Activated B cell treated with CpG ODN at 0.5 μM for 24 hours (primary cell): ENCODE measurements at regions of chr12 and their contacts with region 1.

Region 1: GRCh38 chr12:92928962-92929915 is at the start of gene EEA1:
- DNase-seq: peak; percentile 91
- ATAC-seq: peak; percentile 84
- H3K4me3 Mint-ChIP-seq: peak within 1 kb of the TSS; percentile 89
- H3K27ac Mint-ChIP-seq: peak within 1 kb of the TSS; percentile 96
- H3K4me1 Mint-ChIP-seq: peaks cover 32% of the 10 kb centered on the region
- H3K27me3 Mint-ChIP-seq: no peaks in the 10 kb centered on the region
- CTCF ChIP-seq: no peak
- total RNA-seq, gene EEA1: 21.3 and 22.6 TPM in 2 replicates

Region 2: DNA sequence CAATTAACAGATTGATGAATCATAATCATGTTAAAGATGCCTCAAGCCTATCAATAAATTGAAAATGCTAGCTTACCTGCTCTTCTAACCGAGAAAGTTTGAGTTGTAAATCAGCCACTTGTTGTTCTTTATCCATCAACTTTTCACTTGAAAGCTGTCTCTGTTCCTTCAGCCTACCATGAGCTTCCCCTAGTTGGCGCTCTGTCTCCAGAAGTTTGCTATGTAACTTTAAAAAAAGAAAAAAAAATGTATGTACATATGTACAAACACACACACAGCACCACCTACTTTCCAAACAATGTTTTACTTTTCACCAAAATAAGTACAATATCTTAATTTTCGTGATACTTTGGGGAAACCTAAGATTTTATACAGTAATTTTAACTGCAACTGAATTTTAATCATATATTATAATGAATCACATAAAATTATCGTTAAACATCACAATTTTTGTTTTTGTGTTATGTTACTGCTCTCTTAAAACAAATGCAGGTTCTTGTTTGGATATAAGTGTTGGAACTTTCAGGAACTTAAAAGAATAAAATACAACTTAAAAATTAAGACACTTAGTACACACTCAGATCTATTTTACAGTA is 101.3 kb before region 1 on chr12:
- CTCF ChIA-PET with region 1: interaction called, 3 read pairs
- POLR2A ChIA-PET with region 1: no interaction called
- intact Hi-C with region 1: loop called (anchors 5 kb)
- DNase-seq: no peak
- ATAC-seq: no peak
- H3K4me3 Mint-ChIP-seq: no peak overlapping the region
- H3K27ac Mint-ChIP-seq: no peak overlapping the region
- H3K4me1 Mint-ChIP-seq: no peaks in the 10 kb centered on the region
- H3K27me3 Mint-ChIP-seq: no peaks in the 10 kb centered on the region
- CTCF ChIP-seq: no peak

Region 3: GRCh38 chr12:92886131-92886530 is 43.1 kb before region 1 on chr12:
- CTCF ChIA-PET with region 1: no interaction called
- POLR2A ChIA-PET with region 1: no interaction called
- intact Hi-C with region 1: no loop called
- DNase-seq: no peak
- ATAC-seq: no peak
- H3K4me3 Mint-ChIP-seq: no peak overlapping the region
- H3K27ac Mint-ChIP-seq: no peak overlapping the region
- H3K4me1 Mint-ChIP-seq: peaks cover 2% of the 10 kb centered on the region
- H3K27me3 Mint-ChIP-seq: no peaks in the 10 kb centered on the region
- CTCF ChIP-seq: no peak

Region 4: DNA sequence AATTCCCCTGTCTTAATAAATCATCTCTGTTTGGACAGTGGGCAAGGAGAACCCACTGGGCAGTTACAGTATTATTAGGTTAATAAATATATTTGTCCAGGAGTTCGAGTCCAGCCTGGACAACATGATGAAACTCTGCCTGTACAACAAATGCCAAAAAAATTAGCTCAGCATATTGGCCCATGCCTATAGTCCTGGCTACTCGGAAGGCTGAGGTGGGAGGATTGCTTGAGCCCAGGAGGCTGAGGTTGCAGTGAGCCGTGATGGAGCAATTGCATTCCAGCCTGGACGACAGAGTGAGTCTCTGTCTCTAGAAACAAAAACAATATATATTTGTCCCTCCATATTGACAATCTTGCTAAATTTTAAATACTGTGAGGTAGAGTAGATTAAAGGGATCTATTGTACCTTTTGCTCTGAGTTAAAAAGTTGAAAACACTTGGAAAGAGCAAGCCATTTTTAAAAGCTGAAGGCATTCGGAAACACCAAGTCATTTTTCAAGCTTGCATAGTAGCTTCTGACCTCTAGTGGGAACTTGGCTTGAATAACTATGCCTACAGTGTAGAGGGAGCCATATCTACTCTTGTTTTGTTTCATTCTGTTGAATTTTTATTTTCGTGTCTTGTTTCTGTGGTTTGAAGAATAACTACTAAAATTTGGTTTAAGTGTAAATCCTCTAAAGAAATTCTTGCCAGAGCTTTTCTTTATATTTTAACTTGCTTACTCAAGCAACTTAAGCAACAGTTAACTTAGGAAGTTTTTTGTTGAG is 14.4 kb after region 1 on chr12:
- CTCF ChIA-PET with region 1: no interaction called
- POLR2A ChIA-PET with region 1: interaction called, 41 read pairs
- intact Hi-C with region 1: loop called (anchors 1 kb)
- DNase-seq: no peak
- ATAC-seq: no peak
- H3K4me3 Mint-ChIP-seq: no peak overlapping the region
- H3K27ac Mint-ChIP-seq: peak overlapping the region; percentile 46
- H3K4me1 Mint-ChIP-seq: peaks cover 36% of the 10 kb centered on the region
- H3K27me3 Mint-ChIP-seq: no peaks in the 10 kb centered on the region
- CTCF ChIP-seq: no peak

Region 5: GRCh38 chr12:92955997-92956663 is 26.9 kb after region 1 on chr12:
- CTCF ChIA-PET with region 1: no interaction called
- POLR2A ChIA-PET with region 1: no interaction called
- intact Hi-C with region 1: no loop called
- DNase-seq: no peak
- ATAC-seq: no peak
- H3K4me3 Mint-ChIP-seq: no peak overlapping the region
- H3K27ac Mint-ChIP-seq: peak overlapping the region; percentile 26
- H3K4me1 Mint-ChIP-seq: peaks cover 3% of the 10 kb centered on the region
- H3K27me3 Mint-ChIP-seq: no peaks in the 10 kb centered on the region
- CTCF ChIP-seq: no peak

Region 6: DNA sequence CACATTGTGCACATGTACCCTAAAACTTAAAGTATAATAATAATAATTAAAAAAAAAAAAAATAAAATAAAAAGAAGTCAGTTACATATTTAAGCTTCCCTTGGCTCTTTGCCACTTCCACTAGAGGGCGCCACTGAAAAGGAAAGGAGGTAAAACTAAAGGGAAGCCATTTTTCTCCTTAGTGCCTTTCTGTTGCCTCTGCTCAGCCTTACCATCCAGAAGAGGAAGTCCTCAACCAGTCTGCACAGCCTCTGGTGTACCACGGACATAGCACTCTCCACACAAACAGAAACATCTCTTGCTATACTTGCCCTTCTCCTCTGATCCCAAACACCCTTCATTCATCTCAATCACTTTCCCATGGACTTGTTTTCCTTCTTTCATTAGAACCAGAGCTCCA is 168.8 kb after region 1 on chr12:
- CTCF ChIA-PET with region 1: interaction called, 4 read pairs
- POLR2A ChIA-PET with region 1: interaction called, 3 read pairs
- intact Hi-C with region 1: loop called (anchors 1 kb)
- DNase-seq: peak; percentile 23
- ATAC-seq: peak; percentile 98
- H3K4me3 Mint-ChIP-seq: no peak overlapping the region
- H3K27ac Mint-ChIP-seq: peak overlapping the region; percentile 46
- H3K4me1 Mint-ChIP-seq: peaks cover 18% of the 10 kb centered on the region
- H3K27me3 Mint-ChIP-seq: no peaks in the 10 kb centered on the region
- CTCF ChIP-seq: peak; percentile 34

Region 7: DNA sequence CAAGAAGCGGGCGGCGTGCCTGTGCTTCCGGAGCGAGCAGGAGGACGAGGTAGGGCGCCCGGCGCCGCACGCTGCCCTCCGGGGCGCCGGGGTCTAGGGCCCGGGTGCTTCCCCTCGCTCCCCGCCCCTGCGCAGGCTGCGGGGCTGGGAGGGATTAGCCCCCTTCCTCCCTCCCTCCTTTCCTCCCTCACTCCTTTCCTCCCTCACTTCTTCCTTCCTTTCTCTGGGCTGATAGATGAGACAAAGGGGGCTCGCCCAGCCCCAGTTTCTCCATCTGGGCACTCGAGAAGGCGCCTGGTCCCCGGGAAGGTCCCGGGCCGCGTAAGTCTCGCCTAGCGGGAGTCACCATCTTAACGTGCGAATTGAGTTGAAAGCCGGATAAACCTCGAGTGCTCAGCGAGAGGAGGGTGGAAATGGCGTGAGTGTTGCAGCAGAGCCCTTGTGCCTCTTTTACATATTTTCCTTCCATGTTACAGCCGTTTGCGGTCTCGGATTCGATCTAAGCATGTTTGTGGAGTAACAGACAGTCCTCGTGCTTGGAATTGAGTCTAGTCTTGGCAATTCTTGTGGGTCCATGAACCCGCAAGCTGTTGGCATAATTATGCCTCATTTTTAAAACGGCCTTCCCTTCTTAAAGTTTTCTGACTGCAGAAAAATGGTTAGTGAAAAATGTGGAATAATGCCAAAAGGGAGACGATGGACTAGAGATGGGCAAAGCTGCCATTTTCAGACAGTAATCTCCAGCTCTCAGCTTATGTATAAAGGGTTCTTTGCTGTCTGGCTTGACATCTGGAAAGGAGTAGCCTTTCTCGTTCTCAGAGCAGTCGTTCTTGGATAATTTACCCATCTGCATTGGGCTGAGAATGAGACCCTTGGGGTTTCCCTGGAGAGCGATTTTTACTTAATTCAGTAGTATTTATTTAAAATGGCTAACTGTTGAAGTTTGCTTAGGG is 449.4 kb after region 1 on chr12:
- CTCF ChIA-PET with region 1: no interaction called
- POLR2A ChIA-PET with region 1: no interaction called
- intact Hi-C with region 1: loop called (anchors 1 kb)
- DNase-seq: peak; percentile 57
- ATAC-seq: peak; percentile 40
- H3K4me3 Mint-ChIP-seq: peak overlapping the region; percentile 100
- H3K27ac Mint-ChIP-seq: peak overlapping the region; percentile 100
- H3K4me1 Mint-ChIP-seq: peaks cover 41% of the 10 kb centered on the region
- H3K27me3 Mint-ChIP-seq: no peaks in the 10 kb centered on the region
- CTCF ChIP-seq: no peak

Region 8: DNA sequence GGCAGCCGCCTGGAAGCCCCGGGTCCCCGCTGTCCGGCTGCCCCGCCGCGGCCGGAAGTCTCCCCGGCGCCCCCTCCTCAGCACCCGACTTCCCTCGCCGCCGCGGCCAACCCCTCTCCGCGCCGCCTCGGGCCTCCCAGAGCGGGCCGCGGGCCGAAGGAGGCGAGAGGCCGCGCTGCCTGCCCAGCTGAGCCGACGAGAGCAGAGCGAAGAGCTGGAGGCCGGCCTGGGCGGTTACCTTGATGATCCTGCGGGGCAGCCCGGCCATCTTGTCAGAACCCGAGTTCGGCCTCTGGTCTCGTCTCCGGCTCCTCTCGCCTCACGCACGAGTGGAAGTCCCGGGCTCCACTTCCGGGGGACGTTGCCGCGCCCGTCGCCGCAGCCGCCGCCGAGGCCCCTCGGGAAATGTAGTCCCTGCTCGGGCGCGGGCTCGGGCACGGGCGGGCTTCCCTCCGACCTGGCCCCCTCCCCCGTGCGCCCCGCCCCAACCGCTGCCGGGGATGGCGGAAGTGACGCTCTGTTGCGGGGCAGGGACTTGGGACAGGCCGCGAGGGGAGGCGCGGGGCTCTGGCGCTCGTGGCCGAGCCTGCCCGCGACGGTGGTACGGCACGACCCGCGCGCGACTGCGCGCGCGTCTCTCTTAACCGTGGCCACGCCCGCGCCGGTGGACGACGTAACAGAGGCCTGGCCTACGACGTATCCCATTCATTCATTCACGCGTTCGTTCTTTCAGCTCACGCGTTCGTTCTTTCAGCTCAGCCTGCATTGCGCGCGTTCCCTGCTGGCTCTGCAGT is 512.6 kb after region 1 on chr12 and contains the start of gene UBE2N:
- CTCF ChIA-PET with region 1: no interaction called
- POLR2A ChIA-PET with region 1: interaction called, 14 read pairs
- intact Hi-C with region 1: loop called (anchors 1 kb)
- DNase-seq: peak; percentile 99
- ATAC-seq: peak; percentile 84
- H3K4me3 Mint-ChIP-seq: peak within 1 kb of the TSS; percentile 96
- H3K27ac Mint-ChIP-seq: peak within 1 kb of the TSS; percentile 96
- H3K4me1 Mint-ChIP-seq: peaks cover 56% of the 10 kb centered on the region
- H3K27me3 Mint-ChIP-seq: no peaks in the 10 kb centered on the region
- CTCF ChIP-seq: no peak
- total RNA-seq, gene UBE2N: 152 and 163 TPM in 2 replicates